Right cardiac atrium (tissue), 5 donors: ENCODE measurements at regions of chr15 and their contacts with region 1.

Region 1: DNA sequence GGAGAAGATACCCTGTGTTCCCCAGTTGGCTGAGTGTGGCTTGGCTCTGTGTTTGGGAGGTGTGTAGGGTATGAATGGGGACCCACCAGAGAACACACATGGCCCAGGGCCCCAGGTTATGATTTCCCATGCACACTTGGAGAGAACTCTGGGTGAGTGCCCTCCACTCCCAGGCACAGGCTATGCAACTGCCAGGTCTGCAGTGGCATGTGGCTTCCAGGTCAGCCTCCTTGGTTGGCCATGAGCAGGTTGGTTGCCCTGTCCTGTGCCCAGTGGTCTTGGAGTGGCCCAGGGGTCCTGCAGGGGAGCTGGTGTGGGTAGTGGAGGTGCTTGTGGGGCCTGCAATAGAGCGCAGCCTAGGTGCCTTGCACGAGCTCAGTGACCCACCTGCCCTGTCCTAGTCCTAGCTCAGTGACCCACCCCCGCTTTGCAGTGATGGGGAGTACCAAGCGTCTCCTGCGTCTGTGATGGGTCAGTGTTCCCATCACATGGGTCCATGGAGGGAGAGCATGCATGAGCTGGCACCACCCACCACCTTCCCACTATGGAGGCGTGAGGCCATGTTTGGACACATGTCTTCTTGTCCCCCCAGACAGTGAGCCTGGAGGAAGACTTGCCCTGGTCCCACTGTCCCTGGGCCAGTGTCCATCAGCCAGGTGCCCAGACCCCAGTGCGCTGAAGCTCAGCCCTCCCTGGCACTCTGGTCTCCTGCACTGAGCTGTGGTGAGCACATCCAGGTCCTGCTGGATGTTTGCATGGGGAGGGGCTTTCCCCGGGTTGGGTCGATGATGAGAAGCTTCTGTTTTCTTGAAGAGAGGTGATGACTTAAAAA is 217.3 kb downstream of the SNRPN start:
- DNase-seq: peak; percentile 2 to 28 (median 14)
- ATAC-seq: no peak
- H3K4me3 ChIP-seq: no peak overlapping the region
- H3K27ac ChIP-seq: no peak overlapping the region
- H3K4me1 ChIP-seq: no peaks in the 10 kb centered on the region
- H3K27me3 ChIP-seq: no peaks in the 10 kb centered on the region

Region 2: DNA sequence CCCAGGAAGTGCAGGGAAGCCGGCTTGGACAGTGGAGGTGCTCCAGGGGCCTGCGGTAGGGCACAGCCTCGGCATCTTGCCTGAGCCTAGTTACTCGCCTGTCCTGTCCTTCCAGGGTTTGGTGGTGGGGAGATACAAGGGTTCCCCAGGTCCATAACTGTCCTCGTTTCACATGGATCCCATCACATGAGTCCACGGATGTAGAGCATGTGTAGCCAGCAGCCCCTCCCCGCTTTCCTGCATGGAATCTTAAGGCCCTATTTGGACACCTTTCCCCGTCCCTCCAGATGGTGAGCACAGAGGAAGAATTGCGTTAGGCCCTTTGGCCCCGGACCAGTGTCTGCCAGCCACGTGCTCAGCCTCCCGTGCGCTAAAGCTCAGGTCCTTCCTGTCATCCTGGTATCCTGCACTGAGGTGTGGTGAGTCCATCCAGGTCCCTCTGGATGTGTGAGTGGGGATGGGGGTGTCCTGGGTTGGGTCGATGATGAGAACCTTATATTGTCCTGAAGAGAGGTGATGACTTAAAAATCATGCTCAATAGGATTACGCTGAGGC is 13.2 kb after region 1 on chr15:
- intact Hi-C with region 1: loop called in 1 of 4 experiments (anchors 1 kb)
- DNase-seq: peak in 2 of 3 donors; percentile 5 to 11
- ATAC-seq: no peak
- H3K4me3 ChIP-seq: no peak overlapping the region
- H3K27ac ChIP-seq: no peak overlapping the region
- H3K4me1 ChIP-seq: no peaks in the 10 kb centered on the region
- H3K27me3 ChIP-seq: no peaks in the 10 kb centered on the region